ENCODE measurements at regions of chr2 and their contacts with region 1.

Region 1: DNA sequence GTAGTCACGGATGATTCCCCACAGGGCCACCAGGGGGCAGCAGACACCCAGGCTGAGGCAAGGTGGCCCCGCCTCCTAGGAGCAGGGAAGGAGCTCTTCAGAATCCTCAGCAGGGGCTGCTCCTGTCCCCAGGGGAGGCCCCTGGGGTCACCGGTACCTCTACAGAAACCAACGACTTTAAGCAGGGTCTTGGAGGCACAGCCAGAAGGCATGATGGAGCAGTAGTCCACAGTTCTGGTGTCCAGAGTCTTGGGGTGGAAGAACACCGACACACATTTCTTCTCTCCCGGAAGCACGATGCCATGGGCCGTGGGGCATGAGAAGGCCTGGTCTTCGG is 11.5 kb downstream of the CFAP65 start:
- DNase-seq: peak; percentile 88
- ATAC-seq: peak; percentile 98
- H3K4me3 Mint-ChIP-seq: no peak overlapping the region
- H3K27ac Mint-ChIP-seq: no peak overlapping the region
- H3K4me1 Mint-ChIP-seq: no peaks in the 10 kb centered on the region
- H3K27me3 Mint-ChIP-seq: peaks cover 11% of the 10 kb centered on the region

Region 2: GRCh38 chr2:219002395-219003266 is 27.2 kb before region 1 on chr2:
- CTCF ChIA-PET with region 1: interaction called, 19 read pairs
- POLR2A ChIA-PET with region 1: no interaction called
- intact Hi-C with region 1: no loop called
- DNase-seq: peak; percentile 83
- ATAC-seq: peak; percentile 67
- H3K4me3 Mint-ChIP-seq: peak overlapping the region; percentile 14
- H3K27ac Mint-ChIP-seq: no peak overlapping the region
- H3K4me1 Mint-ChIP-seq: peaks cover 14% of the 10 kb centered on the region
- H3K27me3 Mint-ChIP-seq: peaks cover 69% of the 10 kb centered on the region

Region 3: DNA sequence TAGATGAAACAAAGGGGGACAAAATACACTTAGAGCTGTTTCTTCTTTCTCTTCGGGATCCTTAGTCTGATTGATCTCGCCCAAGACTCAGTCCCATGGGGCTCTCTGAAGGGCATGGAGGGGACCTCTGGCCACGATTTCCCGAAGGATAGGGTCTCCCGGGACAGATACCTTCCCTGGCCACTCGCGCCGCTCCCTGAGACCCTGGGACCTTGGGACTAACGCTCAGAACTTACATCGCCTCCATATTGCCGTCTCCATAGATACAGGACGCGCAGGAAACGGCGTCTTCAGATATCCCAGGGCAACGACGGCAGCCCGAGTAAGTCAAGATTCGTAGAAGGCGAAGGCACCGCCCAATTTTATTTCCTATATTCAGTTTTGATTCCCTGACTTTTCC is 11.5 kb after region 1 on chr2 and contains the start of gene CFAP65:
- CTCF ChIA-PET with region 1: interaction called, 42 read pairs
- POLR2A ChIA-PET with region 1: no interaction called
- intact Hi-C with region 1: no loop called
- DNase-seq: peak; percentile 70
- ATAC-seq: peak; percentile 60
- H3K4me3 Mint-ChIP-seq: peak within 1 kb of the TSS; percentile 51
- H3K27ac Mint-ChIP-seq: no peak within 1 kb of the TSS
- H3K4me1 Mint-ChIP-seq: peaks cover 9% of the 10 kb centered on the region
- H3K27me3 Mint-ChIP-seq: peaks cover 43% of the 10 kb centered on the region
- total RNA-seq, gene CFAP65: not detected

Region 4: DNA sequence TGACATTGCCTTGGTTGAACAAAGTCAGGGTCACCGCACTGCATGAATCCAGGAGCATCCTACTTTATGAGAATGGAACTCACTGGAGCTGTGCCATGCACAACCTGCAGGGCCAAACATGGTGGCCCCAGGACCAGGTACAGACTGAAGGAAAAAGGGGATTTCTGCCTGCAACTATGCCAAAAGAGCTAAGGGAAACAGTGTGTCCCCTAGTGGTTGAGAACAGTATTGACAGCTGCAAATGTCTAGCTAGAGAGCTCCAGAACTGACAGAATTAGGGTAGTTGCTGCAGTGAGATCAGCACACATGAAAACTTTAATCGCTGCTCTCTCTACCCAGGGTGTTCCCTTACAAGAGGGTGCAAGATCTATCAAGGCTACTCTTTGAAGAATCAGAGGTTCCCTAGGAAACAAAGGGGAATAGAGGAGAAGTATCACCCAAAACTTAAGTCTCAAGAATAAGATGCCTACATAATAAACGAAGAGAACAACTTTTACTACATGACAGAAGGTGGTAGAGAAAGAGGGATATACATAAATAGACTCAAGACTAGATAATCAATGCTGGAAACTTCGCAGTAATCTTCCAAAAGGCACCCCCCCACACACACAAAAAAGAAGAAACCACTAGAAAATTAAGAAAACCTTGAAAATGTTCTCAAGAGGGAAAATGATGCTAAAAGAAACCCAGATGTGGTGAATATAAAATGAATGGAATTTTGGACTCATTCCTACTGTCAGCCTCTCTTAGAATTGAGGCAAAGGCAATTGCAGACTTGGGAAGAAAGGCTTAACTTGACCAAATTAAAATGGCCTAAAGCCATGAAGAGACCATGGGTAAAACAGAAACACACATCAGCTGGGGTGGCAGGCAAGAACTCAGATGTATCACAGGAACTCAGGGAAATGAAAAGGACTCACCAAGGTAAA is 74.6 kb after region 1 on chr2:
- CTCF ChIA-PET with region 1: interaction called, 11 read pairs
- POLR2A ChIA-PET with region 1: no interaction called
- intact Hi-C with region 1: no loop called
- DNase-seq: peak; percentile 36
- ATAC-seq: peak; percentile 80
- H3K4me3 Mint-ChIP-seq: no peak overlapping the region
- H3K27ac Mint-ChIP-seq: peak overlapping the region; percentile 44
- H3K4me1 Mint-ChIP-seq: peaks cover 33% of the 10 kb centered on the region
- H3K27me3 Mint-ChIP-seq: no peaks in the 10 kb centered on the region

Region 5: GRCh38 chr2:219119422-219120043 is 89.7 kb after region 1 on chr2:
- CTCF ChIA-PET with region 1: interaction called, 18 read pairs
- POLR2A ChIA-PET with region 1: no interaction called
- intact Hi-C with region 1: loop called (anchors 1 kb)
- DNase-seq: peak; percentile 82
- ATAC-seq: peak; percentile 72
- H3K4me3 Mint-ChIP-seq: no peak overlapping the region
- H3K27ac Mint-ChIP-seq: no peak overlapping the region
- H3K4me1 Mint-ChIP-seq: peaks cover 6% of the 10 kb centered on the region
- H3K27me3 Mint-ChIP-seq: no peaks in the 10 kb centered on the region

Region 6: GRCh38 chr2:219125225-219125885 is 95.6 kb after region 1 on chr2:
- CTCF ChIA-PET with region 1: interaction called, 11 read pairs
- POLR2A ChIA-PET with region 1: no interaction called
- intact Hi-C with region 1: no loop called
- DNase-seq: peak; percentile 26
- ATAC-seq: peak; percentile 70
- H3K4me3 Mint-ChIP-seq: no peak overlapping the region
- H3K27ac Mint-ChIP-seq: no peak overlapping the region
- H3K4me1 Mint-ChIP-seq: peaks cover 18% of the 10 kb centered on the region
- H3K27me3 Mint-ChIP-seq: no peaks in the 10 kb centered on the region